ENCODE measurements at regions of chr19 and their contacts with region 1.

Region 1: GRCh38 chr19:7799640-7800355 is 30.2 kb upstream of the EVI5L start:
- DNase-seq: peak; percentile 72 to 84 (median 77)
- H3K4me3 ChIP-seq: peak overlapping the region; percentile 31 to 70 (median 35)
- H3K4me3 Mint-ChIP-seq: peak overlapping the region; percentile 75 to 86
- H3K27ac ChIP-seq: peak overlapping the region; percentile 67 to 75
- H3K27ac Mint-ChIP-seq: peak overlapping the region; percentile 82 to 93 (median 91)
- H3K4me1 ChIP-seq: peaks cover 14 to 18% of the 10 kb centered on the region in 2 donors
- H3K4me1 Mint-ChIP-seq: peaks cover 12% of the 10 kb centered on the region
- H3K27me3 ChIP-seq: no peaks in the 10 kb centered on the region
- H3K27me3 Mint-ChIP-seq: peaks cover 0 to 8% (median 4%) of the 10 kb centered on the region in 3 donors
- CTCF ChIP-seq: peak; percentile 86

Region 2: DNA sequence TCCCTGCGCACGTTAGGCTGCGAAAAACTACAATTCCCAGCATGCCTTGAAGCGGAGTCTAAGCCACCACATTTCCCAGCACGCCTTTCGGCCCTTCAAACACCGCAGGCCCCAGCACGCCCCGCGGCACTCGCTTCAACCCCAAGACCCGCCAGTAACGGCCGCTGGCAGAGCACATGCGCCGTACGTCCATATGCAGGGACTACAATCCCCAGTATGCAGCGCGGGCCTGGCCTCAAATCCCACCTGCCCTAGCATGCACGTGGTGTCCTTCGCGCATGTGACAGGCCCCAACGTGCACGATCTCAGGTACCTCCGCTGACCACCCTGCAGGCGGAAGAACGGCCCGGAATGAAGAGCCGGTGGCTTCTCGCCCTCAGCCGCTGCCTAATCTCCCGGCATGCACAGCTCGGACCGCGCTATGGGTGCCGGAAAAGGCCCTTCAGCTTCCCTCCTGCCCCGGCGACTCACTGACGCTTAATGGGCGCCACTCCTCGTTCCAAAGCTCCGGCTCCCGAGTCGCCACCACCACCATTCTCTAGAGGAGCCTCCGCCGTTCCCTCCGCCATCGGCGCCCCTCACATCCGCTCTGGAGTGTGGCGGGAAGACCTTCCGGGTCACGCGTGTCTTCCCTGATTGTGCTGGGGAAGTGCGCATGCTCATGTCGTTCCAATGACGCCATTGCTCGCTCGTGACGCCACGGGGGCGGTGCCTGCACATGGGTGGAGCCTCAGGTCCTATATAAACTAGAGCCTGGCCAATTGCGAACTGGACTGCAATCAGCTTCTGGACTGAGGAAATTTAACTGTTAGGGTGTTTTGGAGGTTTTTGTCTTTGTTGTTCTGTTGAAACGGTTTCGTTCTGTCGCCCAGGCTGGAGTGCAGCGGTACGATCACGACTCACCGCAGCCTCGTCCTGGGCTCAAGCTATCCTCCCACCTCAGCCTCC is 2009.0 kb before region 1 on chr19 and contains the start of gene DUS3L:
- intact Hi-C with region 1: no loop called
- DNase-seq: peak; percentile 96 to 97 (median 96)
- H3K4me3 ChIP-seq: peak within 1 kb of the TSS; percentile 47 to 86 (median 67)
- H3K4me3 Mint-ChIP-seq: peak within 1 kb of the TSS; percentile 100
- H3K27ac ChIP-seq: peak within 1 kb of the TSS; percentile 91 to 97
- H3K27ac Mint-ChIP-seq: peak within 1 kb of the TSS; percentile 100
- H3K4me1 ChIP-seq: peaks cover 6 to 21% of the 10 kb centered on the region in 2 donors
- H3K4me1 Mint-ChIP-seq: peaks cover 10% of the 10 kb centered on the region
- H3K27me3 ChIP-seq: no peaks in the 10 kb centered on the region
- H3K27me3 Mint-ChIP-seq: peaks cover 1 to 3% (median 3%) of the 10 kb centered on the region in 3 donors
- CTCF ChIP-seq: no peak
- polyA plus RNA-seq, gene DUS3L: 17.4 to 40.2 (median 23.4) TPM

Region 3: GRCh38 chr19:7562646-7563393 is 237.0 kb before region 1 on chr19:
- intact Hi-C with region 1: loop called (anchors 2 kb)
- DNase-seq: no peak
- H3K4me3 ChIP-seq: no peak overlapping the region
- H3K4me3 Mint-ChIP-seq: no peak overlapping the region
- H3K27ac ChIP-seq: no peak overlapping the region
- H3K27ac Mint-ChIP-seq: no peak overlapping the region
- H3K4me1 ChIP-seq: peaks cover 0 to 5% of the 10 kb centered on the region in 2 donors
- H3K4me1 Mint-ChIP-seq: peaks cover 10% of the 10 kb centered on the region
- H3K27me3 ChIP-seq: no peaks in the 10 kb centered on the region
- H3K27me3 Mint-ChIP-seq: peaks cover 0 to 5% (median 2%) of the 10 kb centered on the region in 3 donors
- CTCF ChIP-seq: no peak

Region 4: DNA sequence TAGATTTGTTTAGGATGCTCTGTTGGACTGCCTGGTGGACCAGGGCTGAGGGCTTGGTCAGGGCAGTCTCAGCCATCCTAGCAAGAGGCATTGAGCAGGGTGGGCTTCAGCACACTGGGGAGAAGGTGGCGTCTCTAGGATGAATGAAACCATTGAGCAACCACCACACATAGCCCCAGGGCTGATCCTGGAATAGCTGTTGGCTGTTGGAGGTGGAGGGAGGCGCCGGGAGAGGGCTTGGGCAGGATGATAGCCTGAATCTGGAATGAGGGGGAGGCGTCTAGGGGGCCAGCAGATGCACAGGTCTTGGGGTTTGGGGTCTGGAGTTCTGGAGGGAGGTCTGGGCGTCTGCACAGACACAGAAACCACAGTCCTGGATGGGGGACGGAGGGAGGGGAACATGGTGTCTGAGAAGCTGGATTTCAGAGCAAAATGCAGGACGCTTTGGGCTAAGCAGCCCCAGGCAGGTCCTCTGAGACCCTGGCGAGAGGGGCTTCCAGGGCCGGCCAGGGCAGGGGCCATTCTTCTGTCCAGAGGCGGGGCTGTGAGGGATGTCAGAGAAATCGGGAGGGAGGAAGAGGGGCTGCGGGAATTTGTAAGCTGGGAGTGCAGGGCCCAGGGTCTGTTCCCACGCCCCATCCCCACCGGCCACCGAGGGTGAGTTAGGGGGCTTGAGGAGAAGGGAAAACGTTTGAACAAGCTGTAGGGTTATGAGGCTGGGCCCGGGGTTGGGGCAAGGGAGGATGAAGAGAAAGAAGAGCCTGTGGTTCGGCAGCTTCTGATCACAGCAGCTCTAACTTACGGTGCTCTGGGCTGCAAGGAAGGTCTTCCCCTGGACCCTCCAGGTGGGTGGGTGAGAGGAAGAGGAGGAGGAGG is 114.0 kb before region 1 on chr19:
- intact Hi-C with region 1: loop called (anchors 2 to 5 kb)
- DNase-seq: no peak
- H3K4me3 ChIP-seq: no peak overlapping the region
- H3K4me3 Mint-ChIP-seq: no peak overlapping the region
- H3K27ac ChIP-seq: no peak overlapping the region
- H3K27ac Mint-ChIP-seq: peak overlapping the region in 6 of 7 donors; percentile 26 to 78 (median 40)
- H3K4me1 ChIP-seq: peaks cover 23 to 35% of the 10 kb centered on the region in 2 donors
- H3K4me1 Mint-ChIP-seq: peaks cover 37% of the 10 kb centered on the region
- H3K27me3 ChIP-seq: no peaks in the 10 kb centered on the region
- H3K27me3 Mint-ChIP-seq: peaks cover 3 to 7% (median 3%) of the 10 kb centered on the region in 3 donors
- CTCF ChIP-seq: no peak

Measured in CD14-positive monocyte (primary cell).